ENCODE measurements at regions of chr2 and their contacts with region 1.

Region 1: DNA sequence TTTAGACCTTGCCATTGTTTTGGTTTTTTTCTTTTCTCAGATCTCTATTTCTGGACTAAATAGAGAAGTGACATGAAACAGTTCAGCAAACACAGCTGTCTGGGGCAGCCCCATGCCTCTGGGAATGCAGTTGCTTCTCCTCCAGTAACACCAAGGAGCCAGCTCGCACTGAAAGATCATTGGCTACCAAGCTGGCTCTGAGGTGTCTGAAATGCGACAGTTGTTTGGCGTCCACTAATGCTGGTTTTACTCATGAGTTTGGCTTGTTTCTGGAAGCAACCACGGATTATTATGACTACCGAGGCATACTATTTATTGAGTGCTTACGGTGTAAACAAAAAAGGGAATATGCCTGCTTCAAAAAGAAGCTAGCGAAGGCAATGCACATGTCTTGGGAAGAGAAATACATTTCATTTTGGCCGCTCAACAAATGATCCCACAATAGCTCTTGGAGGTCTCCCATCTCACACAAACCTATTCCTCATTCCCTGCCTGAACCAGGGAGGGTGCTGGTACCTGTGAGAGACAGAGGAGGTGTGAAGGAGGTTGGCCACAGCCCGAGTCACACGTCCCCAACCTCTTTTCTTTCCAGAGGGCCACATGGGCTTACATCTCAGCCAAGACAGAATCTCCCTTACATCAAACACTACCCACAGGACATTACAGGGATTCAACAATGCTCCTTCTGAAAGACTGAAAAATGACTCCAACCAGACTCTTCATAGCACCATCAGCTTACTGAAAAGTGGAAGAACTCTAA is 37.5 kb upstream of the NEB start:
- DNase-seq: no peak
- H3K4me3 ChIP-seq: no peak overlapping the region
- H3K27ac ChIP-seq: no peak overlapping the region
- H3K4me1 ChIP-seq: peaks cover 17% of the 10 kb centered on the region
- H3K27me3 ChIP-seq: no peaks in the 10 kb centered on the region
- CTCF ChIP-seq: no peak
- POLR2A ChIP-seq: no peak

Region 2: GRCh38 chr2:151508519-151508918 is 263.3 kb before region 1 on chr2:
- CTCF ChIA-PET with region 1: no interaction called
- POLR2A ChIA-PET with region 1: no interaction called
- dilution Hi-C with region 1: no loop called
- intact Hi-C with region 1: loop called (anchors 5 kb)
- DNase-seq: no peak
- H3K4me3 ChIP-seq: no peak overlapping the region
- H3K27ac ChIP-seq: no peak overlapping the region
- H3K4me1 ChIP-seq: no peaks in the 10 kb centered on the region
- H3K27me3 ChIP-seq: no peaks in the 10 kb centered on the region
- CTCF ChIP-seq: no peak
- POLR2A ChIP-seq: no peak

Region 3: GRCh38 chr2:151730262-151730975 is 41.4 kb before region 1 on chr2:
- CTCF ChIA-PET with region 1: no interaction called
- POLR2A ChIA-PET with region 1: no interaction called
- dilution Hi-C with region 1: no loop called
- intact Hi-C with region 1: no loop called
- DNase-seq: no peak
- H3K4me3 ChIP-seq: no peak overlapping the region
- H3K27ac ChIP-seq: no peak overlapping the region
- H3K4me1 ChIP-seq: peaks cover 4% of the 10 kb centered on the region
- H3K27me3 ChIP-seq: peaks cover 0 to 3% of the 10 kb centered on the region in 2 experiments
- CTCF ChIP-seq: no peak
- POLR2A ChIP-seq: no peak